ENCODE measurements at regions of chr3 and their contacts with region 1.

Region 1: GRCh38 chr3:141561426-141562034 is 74.7 kb downstream of the RASA2 start:
- DNase-seq: no peak
- ATAC-seq: peak; percentile 70

Region 2: DNA sequence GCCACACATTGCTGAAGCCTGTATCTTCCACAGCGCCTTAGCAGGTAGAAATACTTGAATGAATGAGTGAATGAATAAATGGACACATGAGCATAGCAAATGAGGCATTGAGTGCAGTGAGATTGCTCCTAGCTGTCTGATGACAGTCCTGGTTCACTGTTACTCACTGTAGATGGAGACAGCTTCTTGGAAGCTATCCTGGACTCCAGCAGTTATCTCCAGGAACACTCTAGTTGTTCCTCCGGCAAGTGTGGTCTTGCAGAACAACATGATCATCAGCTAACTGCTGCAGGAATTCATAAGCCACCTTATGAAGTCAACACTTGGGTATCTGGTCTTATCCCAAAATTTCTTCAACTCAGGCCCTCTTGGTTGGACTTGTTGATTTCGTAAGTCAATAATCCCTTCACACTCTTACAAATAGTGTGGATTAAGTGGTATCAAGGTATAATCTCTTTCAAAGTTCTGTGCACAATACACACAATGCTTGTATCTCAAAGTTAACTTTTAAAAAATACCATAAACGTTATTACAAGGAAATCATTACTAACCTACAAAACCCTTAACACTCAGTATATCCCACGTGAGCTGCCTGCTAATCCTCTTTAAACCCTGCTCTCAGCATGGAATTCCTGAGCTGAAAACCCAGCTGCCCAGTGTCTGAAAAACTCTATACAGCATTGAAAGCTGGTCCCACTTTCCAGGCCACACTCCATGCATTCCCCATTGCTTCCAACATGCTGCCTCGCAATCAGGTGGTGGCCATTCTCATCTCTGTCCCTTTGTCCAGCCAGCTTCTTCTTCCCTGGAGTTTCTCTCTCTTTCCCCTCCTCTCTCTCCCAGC is 207.7 kb before region 1 on chr3:
- intact Hi-C with region 1: loop called (anchors 10 kb)
- DNase-seq: no peak
- ATAC-seq: no peak

Region 3: DNA sequence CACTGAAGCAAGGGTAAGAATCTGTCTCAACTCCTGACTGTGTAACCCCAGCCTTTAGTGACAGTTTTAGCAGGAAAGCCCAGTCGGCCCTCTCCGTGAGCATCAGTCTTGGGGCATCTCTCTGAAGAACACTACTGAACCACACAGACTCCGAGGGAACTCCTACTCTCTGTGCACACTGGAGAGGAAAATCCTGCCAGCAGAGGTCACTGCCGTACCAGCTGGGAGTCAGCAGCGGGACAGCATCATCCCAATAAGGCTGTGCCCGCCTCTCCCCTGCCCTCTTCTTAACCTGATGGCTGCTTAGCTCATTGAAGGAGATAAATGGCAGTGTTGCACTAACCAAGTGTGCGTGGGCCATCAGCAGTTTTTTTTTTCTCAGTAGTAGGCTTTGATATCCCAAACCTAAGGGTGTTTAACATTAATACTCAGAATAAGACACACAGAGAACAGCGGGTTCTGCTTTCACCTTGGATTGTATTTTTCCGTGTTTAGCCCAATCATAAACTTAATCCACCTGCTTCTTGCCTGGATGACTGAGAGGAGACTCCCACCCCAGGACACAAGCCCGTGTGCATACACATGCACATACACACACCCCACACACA is 101.3 kb before region 1 on chr3:
- intact Hi-C with region 1: loop called (anchors 5 kb)
- DNase-seq: peak; percentile 96
- ATAC-seq: peak; percentile 94

Region 4: DNA sequence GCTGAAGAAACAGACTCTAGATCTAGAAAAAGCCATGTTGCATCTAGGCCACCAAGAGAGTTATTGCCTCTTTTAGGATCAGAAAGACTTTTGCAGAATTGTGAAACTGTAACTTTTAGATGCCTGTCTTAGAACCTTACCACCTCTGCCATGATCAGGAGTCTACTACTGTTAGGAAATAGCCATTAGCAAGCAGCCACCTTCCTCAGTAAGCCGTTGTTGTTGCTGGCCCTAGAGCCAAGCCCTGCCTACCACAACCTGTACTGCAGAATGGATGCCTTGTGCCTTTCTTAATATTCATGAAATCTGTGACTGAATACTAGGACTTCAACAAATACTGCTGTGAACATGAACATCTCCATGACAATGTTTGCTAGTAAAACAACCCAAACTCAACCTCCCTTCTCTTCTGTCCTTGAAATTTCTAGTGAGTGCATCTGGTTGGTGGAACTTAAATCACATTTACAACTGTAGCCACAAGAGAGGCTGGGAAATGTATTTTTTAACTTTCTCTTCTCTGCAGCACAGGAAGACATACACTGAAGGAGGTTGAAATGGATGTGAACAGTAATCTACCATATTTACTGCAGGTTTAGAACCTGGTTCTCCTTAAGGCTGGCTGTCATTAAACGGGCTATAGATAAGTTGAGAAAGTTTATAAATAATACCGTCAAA is 54.0 kb before region 1 on chr3:
- intact Hi-C with region 1: no loop called
- DNase-seq: no peak
- ATAC-seq: no peak

Measured in sciatic nerve (tissue), 2 donors.